ENCODE measurements at regions of chr16 and their contacts with region 1.

Region 1: DNA sequence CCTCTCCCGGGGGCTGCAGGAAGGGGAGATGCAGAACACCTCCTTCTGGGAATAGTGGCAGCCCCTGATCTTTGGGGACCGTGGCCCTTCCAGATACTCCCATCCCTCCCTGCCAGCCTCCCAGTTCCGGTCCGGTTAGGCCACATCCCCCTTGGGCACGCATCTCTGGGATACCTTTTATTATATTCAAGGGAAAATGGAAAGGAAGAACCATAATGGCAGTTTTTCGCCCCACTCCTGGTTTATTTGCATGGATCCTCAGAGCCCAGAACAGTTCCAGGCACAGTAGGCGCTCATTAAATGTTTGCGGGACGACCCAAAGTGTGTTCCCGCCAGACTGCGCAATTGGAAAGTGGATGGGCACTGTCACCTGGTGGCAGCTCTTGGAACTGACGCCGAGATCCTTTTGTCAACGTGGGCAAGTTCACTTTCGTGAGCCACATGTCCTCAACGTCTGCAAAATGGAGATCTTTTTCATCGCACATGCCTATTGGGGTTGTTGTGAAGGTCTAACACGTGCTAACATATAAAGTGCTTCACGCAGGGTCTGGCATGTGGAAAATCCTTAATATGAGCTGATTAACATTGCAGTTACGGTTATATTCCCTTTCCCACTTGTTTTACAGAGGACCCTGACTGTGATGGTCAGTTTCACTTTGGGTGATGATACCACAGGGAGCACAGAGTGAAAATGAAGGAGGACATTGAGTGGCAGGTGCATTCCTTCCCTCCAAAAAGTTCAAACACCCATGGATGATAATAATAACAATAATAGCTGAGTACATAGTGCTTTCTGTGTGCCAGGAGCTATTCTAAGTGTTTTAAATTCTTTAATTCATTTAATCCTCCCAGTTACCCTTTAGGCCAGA is 1.7 kb upstream of the GPRC5B start:
- DNase-seq: peak; percentile 86
- ATAC-seq: peak; percentile 66
- H3K4me3 Mint-ChIP-seq: peak overlapping the region; percentile 53
- H3K27ac Mint-ChIP-seq: no peak overlapping the region
- H3K4me1 Mint-ChIP-seq: peaks cover 18% of the 10 kb centered on the region
- H3K27me3 Mint-ChIP-seq: peaks cover 37% of the 10 kb centered on the region

Region 2: DNA sequence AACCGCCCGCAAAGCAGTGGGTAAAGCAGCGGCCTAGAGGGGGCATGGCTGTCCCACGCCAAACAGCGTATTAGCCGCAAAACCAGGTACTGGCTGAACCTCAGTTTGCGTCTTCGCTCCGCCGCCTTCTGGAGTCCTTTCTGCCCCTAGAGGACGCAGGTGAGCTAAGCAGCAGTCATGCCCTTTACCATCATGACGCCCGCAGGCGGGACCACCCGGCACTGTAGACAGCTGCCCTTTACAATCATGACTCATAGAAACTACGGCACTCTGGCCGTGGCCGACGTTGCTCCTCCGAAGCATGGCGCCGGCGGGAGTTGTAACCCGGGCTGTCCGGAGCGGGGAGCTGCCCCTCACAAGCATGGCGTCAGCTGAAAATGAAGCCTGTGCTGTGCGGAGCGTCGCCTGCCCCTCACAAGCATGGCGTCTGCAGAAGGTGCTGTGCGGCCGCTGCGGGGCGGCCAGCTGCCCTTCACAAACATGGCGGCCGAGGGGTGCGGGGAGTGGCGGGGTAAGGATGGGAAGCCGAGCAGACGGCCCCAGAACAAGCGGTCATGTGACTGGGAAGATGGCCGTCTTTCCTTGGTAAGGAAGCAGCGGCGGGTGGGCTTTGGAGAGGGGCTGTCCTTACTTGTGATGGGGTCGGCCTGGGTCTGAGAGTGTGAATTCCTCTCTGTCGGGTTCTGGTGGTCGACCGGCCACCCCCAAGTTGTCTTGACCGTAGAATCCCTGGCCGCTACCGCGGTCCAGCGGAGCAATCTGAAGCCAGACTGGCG is 331.0 kb before region 1 on chr16 and contains the start of gene VPS35L:
- CTCF ChIA-PET with region 1: interaction called, 10 read pairs
- DNase-seq: peak; percentile 97
- ATAC-seq: peak; percentile 98
- H3K4me3 Mint-ChIP-seq: peak within 1 kb of the TSS; percentile 92
- H3K27ac Mint-ChIP-seq: peak within 1 kb of the TSS; percentile 87
- H3K4me1 Mint-ChIP-seq: peaks cover 26% of the 10 kb centered on the region
- H3K27me3 Mint-ChIP-seq: no peaks in the 10 kb centered on the region
- total RNA-seq, gene VPS35L: 43.4 to 47.7 TPM

Region 3: DNA sequence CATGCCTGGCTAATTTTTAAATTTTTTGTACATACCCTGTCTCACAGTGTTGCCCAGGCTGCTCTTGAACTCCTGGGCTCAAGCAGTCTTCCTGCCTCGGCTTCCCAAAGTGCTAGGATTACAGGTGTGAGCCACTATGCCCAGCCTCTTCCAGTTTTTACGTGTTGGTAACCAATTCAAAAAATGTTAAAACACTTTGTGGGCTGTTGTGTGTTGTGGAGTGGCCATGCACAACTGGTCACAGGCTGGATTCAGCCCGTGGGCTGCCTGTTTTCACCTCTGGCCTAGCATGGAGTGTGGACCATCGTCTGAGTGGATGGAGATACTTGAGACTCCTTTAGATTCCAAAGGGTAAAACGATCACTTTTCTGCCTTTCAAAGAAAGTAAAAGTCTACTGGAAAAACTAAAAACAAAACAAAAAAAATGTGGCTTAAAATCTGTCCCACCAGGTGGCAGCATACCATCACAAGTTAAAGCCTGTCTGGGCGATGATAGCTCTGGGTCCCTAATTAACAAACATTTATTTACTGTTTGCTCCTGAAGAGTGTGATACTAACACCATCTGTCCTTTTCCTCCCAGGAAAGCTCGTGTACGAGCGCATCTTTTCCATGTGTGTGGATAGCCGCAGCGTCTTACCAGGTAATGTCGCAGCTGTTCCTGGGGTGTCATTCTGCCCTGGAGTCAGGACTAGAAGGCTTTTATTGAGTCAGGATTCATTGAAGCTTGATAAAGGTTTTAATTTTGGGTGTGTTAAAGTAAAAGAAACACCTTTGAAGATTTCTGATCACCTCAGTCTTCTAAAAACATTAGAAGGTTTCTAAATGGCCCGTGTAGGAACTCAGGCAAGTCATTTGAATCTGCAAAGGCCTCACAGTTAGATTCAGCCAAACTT is 285.0 kb before region 1 on chr16:
- CTCF ChIA-PET with region 1: interaction called, 78 read pairs
- DNase-seq: no peak
- ATAC-seq: no peak
- H3K4me3 Mint-ChIP-seq: no peak overlapping the region
- H3K27ac Mint-ChIP-seq: no peak overlapping the region
- H3K4me1 Mint-ChIP-seq: peaks cover 2% of the 10 kb centered on the region
- H3K27me3 Mint-ChIP-seq: no peaks in the 10 kb centered on the region

Measured in activated CD8-positive, alpha-beta memory T cell treated with anti-CD3 and anti-CD28 coated beads, Interleukin-2, amount 10 ng/mL, durations not matched to agents 7 days and 5 days (primary cell).